Breast epithelium (tissue), 4 donors: ENCODE measurements at regions of chr17 and their contacts with region 1.

Region 1: GRCh38 chr17:79695797-79696609 is 34.7 kb upstream of the ENPP7 start:
- DNase-seq: peak in 1 of 2 donors; percentile 29
- H3K4me3 ChIP-seq: peak overlapping the region in 1 of 3 donors; percentile 28
- H3K27ac ChIP-seq: no peak overlapping the region
- H3K4me1 ChIP-seq: peaks cover 4 to 14% of the 10 kb centered on the region in 2 donors
- H3K27me3 ChIP-seq: peaks cover 0 to 16% of the 10 kb centered on the region in 2 donors
- CTCF ChIP-seq: no peak
- POLR2A ChIP-seq: no peak

Region 2: GRCh38 chr17:78206298-78206697 is 1489.7 kb before region 1 on chr17:
- intact Hi-C with region 1: loop called (anchors 5 kb)
- DNase-seq: no peak
- H3K4me3 ChIP-seq: no peak overlapping the region
- H3K27ac ChIP-seq: no peak overlapping the region
- H3K4me1 ChIP-seq: no peaks in the 10 kb centered on the region
- H3K27me3 ChIP-seq: no peaks in the 10 kb centered on the region
- CTCF ChIP-seq: no peak
- POLR2A ChIP-seq: no peak

Region 3: DNA sequence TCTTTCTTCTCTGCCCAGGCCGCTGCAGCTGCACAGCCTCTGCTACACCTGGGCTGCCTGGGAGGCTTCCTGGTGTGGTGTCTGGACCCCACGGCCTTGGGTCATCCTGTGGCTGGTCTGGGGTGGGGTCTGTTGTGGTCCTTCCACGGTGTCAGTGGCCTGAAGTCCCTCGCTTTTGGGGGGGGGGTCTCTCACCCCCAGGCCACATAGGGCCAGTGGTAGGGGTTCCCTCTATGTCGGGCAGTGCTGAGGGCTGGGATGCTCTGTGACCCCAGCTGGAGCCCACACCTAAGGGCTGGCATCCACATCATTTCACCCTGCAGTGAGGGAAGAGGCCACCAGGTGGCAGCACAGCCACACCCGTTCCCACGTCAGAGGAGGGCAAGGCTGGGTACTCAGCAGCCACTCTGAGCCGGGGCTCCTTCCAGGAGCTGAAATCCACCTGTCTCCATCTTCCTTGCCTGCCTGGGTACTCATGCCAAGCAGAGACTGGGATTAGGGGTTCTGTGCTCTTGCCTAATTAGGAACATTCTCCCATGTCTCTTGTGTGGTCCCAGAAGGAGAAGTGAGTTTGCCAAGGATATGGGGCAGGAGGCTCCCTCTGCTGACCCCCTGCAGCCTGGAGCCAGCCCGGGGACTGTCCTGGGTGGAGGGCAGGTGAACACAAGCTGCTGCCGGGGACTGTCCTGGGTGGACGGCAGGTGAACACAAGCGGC is 608.4 kb before region 1 on chr17:
- intact Hi-C with region 1: no loop called
- DNase-seq: peak; percentile 41 to 76
- H3K4me3 ChIP-seq: no peak overlapping the region
- H3K27ac ChIP-seq: no peak overlapping the region
- H3K4me1 ChIP-seq: no peaks in the 10 kb centered on the region
- H3K27me3 ChIP-seq: peaks cover 0 to 30% of the 10 kb centered on the region in 2 donors
- CTCF ChIP-seq: peak in 2 of 3 donors; percentile 80 to 85
- POLR2A ChIP-seq: no peak

Region 4: DNA sequence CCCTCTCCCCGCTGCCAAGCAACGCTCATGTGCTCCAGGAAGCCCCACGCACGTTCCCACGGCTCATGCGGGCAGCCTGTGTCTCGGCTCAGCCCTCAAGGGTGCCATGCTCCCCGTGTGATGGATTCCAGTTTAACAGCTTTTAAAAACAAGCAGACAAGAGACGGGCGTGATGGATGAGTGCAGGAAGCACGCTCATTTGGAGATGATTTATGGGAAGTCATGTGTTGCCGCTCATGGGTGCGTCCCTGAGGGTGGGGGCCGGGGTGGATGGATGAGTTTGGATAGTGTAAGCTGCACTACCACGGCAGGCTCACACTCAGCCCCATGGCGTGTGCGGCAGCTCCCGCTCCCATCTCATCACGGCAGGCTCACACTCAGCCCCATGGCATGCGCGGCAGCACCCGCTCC is 217.9 kb before region 1 on chr17:
- intact Hi-C with region 1: no loop called
- DNase-seq: no peak
- H3K4me3 ChIP-seq: no peak overlapping the region
- H3K27ac ChIP-seq: no peak overlapping the region
- H3K4me1 ChIP-seq: no peaks in the 10 kb centered on the region
- H3K27me3 ChIP-seq: peaks cover 0 to 49% of the 10 kb centered on the region in 2 donors
- CTCF ChIP-seq: no peak
- POLR2A ChIP-seq: no peak